ENCODE measurements at regions of chr6 and their contacts with region 1.

Region 1: DNA sequence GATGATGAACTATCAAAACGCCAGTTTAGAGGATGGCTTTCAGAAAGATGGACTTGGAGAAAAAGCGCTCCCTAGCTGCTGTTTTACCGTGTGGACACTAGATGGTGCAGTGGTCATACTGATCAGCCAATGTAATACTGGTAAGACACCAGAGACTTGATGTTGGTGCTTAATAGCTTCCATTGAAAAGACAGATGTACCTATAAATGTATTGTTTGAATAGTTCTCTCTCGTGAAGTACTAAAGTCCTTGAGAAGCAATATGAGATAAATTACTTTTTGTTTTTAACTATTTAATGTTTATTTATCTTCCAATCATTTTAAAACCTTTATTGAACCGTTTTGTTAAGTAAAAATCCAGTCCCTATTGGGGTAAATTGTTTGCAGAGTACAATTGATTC is 63.9 kb upstream of the FUCA2 start:
- DNase-seq: peak; percentile 58
- ATAC-seq: peak; percentile 93
- H3K4me3 Mint-ChIP-seq: no peak overlapping the region
- H3K27ac Mint-ChIP-seq: no peak overlapping the region
- H3K4me1 Mint-ChIP-seq: no peaks in the 10 kb centered on the region
- H3K27me3 Mint-ChIP-seq: no peaks in the 10 kb centered on the region

Region 2: DNA sequence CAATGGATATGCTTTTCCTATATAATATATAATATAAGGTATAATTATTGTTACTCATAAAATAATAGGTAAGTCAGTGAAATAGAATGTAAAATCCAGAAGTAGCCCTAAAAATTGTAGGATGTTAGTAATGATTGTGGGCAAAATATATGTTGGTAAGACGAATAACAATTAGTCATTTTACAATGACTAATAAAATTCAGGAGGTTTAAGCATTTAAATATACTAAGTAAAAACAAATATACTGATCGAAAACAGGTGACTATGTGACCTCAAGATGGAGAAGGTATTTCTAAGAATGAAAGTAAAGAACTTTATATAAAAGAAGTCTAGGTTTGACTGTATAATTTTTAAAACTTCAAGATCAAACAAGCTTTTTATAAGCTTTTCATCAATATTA is 92.8 kb before region 1 on chr6:
- CTCF ChIA-PET with region 1: no interaction called
- POLR2A ChIA-PET with region 1: no interaction called
- intact Hi-C with region 1: no loop called
- DNase-seq: no peak
- ATAC-seq: no peak
- H3K4me3 Mint-ChIP-seq: no peak overlapping the region
- H3K27ac Mint-ChIP-seq: no peak overlapping the region
- H3K4me1 Mint-ChIP-seq: no peaks in the 10 kb centered on the region
- H3K27me3 Mint-ChIP-seq: no peaks in the 10 kb centered on the region

Region 3: GRCh38 chr6:143536865-143537691 is 38.4 kb before region 1 on chr6:
- CTCF ChIA-PET with region 1: interaction called, 10 read pairs
- POLR2A ChIA-PET with region 1: no interaction called
- intact Hi-C with region 1: no loop called
- DNase-seq: peak; percentile 81
- ATAC-seq: peak; percentile 73
- H3K4me3 Mint-ChIP-seq: peak overlapping the region; percentile 80
- H3K27ac Mint-ChIP-seq: peak overlapping the region; percentile 84
- H3K4me1 Mint-ChIP-seq: peaks cover 39% of the 10 kb centered on the region
- H3K27me3 Mint-ChIP-seq: no peaks in the 10 kb centered on the region

Region 4: DNA sequence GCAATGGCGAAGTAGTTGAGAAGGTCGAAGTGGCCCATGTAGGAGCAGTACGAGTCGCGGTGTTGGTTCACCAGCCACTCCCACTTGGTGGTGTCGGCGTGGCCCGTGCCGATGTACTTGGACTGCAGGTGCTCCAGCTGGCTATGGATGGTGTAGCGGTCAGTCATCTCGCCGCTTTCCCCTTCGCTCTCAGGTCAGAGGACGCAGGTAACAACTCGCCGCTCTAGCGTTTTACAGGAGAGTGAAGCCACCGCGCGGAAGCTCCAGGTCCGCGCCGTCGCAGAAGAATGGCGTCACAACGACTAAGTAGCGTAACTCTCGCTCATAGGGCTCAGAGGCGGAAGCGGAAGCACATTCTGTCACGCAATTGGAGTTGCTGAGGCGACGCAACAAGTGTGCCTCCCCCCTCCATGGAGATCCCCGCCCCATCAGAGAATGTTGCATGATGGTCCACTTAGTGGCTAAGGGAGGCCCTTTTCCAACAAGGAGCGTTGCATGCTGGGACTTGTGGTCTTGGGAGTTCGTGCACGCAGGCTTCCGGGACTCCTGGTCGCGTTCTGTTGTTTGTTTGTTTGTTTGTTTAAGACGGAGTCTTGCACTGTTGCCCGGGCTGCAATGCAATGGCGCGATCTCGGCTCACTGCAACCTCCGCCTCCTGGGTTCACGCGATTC is 520.0 kb after region 1 on chr6 and contains the start of gene SF3B5:
- CTCF ChIA-PET with region 1: no interaction called
- POLR2A ChIA-PET with region 1: no interaction called
- intact Hi-C with region 1: loop called in 1 of 2 experiments (anchors 5 kb)
- DNase-seq: peak; percentile 98
- ATAC-seq: peak; percentile 97
- H3K4me3 Mint-ChIP-seq: peak within 1 kb of the TSS; percentile 84
- H3K27ac Mint-ChIP-seq: peak within 1 kb of the TSS; percentile 91
- H3K4me1 Mint-ChIP-seq: peaks cover 22% of the 10 kb centered on the region
- H3K27me3 Mint-ChIP-seq: no peaks in the 10 kb centered on the region
- total RNA-seq, gene SF3B5: 152 to 164 TPM

Region 5: DNA sequence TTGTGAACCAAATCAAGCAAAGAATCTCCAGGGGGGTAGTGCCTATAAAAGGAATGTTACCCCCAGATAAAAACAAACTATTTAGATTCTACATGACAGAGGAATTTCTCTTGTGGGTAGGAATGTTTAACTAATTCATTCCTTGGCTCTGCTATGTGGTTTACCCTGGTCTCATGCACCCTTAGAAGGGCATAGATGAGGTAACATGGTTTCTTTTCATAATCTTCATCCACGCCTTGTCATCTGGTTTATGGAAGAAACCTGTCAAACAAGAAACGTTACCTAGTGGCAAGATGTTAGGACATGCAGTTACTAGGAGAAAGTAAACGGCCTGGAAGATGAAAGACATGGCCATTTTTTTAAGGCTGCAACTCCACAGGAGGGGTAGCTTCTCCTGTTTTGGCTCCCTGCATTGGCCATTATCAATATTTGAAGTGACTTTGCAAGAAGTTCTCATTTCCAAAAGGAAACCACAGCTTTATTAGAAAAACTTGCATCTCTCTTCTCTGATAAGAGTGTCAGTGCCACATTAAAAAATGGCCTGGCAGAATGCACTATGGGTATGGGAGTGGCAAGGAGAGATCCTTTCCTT is 620.3 kb after region 1 on chr6:
- CTCF ChIA-PET with region 1: no interaction called
- POLR2A ChIA-PET with region 1: no interaction called
- intact Hi-C with region 1: no loop called
- DNase-seq: no peak
- ATAC-seq: no peak
- H3K4me3 Mint-ChIP-seq: no peak overlapping the region
- H3K27ac Mint-ChIP-seq: no peak overlapping the region
- H3K4me1 Mint-ChIP-seq: peaks cover 4% of the 10 kb centered on the region
- H3K27me3 Mint-ChIP-seq: no peaks in the 10 kb centered on the region

Measured in activated CD4-positive, alpha-beta T cell treated with anti-CD3 and anti-CD28 coated beads for 36 hours (primary cell).